ENCODE measurements at regions of chr10 and their contacts with region 1.

Region 1: DNA sequence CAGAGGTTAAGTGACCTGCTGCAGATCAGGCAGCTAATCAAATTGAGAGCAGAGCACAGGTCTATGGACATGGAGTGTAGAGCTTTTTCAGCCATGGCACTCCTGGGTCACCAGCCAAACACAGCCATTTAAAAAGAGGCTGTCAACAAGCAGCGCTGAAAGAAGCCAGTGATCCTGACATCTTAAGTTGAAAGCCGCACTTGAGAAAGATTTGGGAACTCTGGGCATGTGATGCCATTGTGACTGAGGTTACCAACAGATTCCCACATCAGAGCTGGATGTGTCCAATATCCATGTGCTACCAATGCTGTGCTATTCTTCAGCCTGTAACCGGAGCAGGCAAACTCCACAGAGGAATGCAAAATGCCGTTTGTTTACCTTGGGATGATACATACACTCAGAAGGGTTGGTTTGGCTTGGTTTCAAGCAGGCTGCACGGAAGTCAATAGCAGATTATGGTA is 56.2 kb upstream of the ABLIM1 start:
- DNase-seq: no peak

Region 2: DNA sequence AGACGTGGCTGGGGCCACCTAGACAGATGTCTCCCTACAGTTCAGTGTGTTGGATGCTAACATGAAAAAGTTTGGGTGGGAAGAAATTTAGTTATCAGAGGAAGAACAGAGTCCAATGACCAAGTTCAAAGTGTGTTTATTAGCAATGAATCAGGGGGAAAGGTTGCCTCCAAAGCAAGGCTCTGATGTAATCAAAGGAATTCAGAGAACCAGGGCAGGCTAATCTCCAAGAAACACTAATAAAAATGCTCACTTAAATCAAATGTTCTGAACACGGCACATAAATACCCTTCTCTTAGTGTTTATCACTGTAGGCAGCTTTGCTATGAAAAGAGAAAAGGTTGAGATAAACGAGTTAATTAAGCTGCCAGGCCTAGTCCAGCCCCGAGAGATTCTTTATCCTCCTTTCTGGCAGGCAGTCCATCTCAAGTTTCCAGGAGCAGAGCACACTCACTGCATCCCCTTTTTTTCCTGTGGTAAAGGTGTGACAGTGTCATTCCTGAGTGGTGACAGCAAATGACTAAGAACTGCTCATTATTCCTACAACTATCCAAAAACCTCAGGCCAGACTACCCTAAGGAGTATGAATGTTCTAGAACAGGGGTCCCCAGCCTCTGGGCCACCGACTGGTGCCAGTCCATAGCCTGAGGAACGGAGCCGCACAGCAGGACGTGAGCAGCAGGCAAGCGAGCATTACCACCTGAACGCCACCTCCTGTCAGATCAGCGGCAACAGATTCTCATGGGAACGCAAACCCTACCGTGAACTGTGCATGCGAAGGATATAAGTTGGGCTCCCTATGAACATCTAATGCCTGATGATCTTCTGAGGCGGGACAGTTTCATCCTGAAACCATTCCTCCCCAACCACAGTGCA is 40.4 kb after region 1 on chr10:
- intact Hi-C with region 1: loop called (anchors 5 kb)
- DNase-seq: no peak

Region 3: DNA sequence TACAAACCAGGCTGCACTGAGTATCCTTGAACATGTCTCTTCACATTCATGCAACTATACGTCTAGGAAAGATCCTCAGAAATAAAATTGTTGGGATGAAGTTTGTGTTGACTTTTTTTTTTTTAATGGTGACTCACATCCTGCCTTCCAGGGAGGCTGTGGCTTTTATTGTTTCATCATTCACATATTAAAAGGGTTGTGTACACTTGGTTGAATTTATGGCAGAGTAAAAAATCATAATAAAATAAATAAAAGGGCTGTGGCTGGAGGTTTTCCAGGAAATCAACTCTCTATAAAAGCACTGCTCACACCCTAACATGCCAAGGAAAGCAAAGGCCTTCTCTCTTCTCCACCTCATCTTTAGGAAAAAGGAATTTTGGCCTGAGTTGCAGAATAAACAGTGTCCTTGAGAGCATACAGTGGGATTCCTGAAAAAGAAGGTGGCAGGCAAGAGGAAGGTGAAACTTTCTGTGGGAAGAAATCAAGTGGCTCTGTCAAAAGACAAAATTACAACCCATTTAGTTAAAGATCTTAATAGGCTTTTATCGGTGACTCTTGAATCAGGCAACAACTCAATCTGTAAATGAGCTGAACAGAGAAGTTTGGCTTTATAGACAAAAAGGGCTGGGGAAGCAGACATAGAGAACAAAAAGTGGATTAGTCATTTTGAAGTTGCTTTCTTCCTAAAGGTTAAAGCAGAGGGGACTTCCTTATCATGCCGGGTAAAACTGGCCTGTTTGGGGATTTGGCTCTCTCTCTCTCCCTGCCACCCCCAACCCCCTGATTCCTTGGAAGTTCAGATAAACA is 65.7 kb after region 1 on chr10:
- intact Hi-C with region 1: loop called (anchors 5 kb)
- DNase-seq: no peak

Region 4: DNA sequence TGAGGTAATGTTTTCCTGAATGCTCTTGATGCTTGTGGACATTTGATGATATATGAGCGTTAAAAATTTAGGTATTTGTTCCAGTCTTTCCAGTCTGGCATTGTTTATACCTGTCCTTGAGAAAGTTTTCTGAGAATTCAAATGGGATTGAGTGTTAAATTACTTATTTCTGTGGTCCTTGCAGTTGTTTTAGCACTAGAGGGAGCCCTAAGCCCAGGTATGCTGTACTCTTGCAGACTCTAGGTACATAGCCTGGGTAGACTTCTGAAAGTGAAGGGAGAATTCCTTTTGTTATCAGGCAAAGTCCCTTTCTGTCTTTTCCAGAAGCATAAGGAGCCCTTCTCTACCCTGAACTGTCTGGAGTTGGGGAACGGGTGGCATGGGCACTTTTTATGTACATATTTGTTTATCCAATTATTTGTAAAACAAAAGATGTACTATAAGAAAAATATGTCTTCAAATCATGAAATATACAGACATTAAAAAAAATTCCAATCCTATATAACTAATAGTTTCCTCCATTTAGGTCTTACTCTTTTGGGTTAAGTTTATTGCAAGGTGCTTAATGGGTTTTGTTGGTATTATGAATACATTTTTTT is 641.0 kb after region 1 on chr10:
- intact Hi-C with region 1: no loop called
- DNase-seq: no peak